Activated B cell treated with CpG ODN at 0.5 μM for 24 hours (primary cell): ENCODE measurements at regions of chr4 and their contacts with region 1.

Region 1: GRCh38 chr4:47562297-47562696 is 77.2 kb downstream of the ATP10D start:
- DNase-seq: no peak
- ATAC-seq: no peak
- H3K4me3 Mint-ChIP-seq: no peak overlapping the region
- H3K27ac Mint-ChIP-seq: no peak overlapping the region
- H3K4me1 Mint-ChIP-seq: peaks cover 10% of the 10 kb centered on the region
- H3K27me3 Mint-ChIP-seq: no peaks in the 10 kb centered on the region
- CTCF ChIP-seq: no peak

Region 2: GRCh38 chr4:46844325-46844917 is 717.9 kb before region 1 on chr4:
- CTCF ChIA-PET with region 1: no interaction called
- POLR2A ChIA-PET with region 1: no interaction called
- intact Hi-C with region 1: loop called (anchors 10 kb)
- DNase-seq: no peak
- ATAC-seq: no peak
- H3K4me3 Mint-ChIP-seq: no peak overlapping the region
- H3K27ac Mint-ChIP-seq: no peak overlapping the region
- H3K4me1 Mint-ChIP-seq: no peaks in the 10 kb centered on the region
- H3K27me3 Mint-ChIP-seq: no peaks in the 10 kb centered on the region
- CTCF ChIP-seq: peak; percentile 61

Region 3: GRCh38 chr4:47485047-47485692 is 77.1 kb before region 1 on chr4 and contains the start of gene ATP10D:
- CTCF ChIA-PET with region 1: interaction called, 8 read pairs
- POLR2A ChIA-PET with region 1: no interaction called
- intact Hi-C with region 1: loop called (anchors 1 kb)
- DNase-seq: peak; percentile 82
- ATAC-seq: peak; percentile 96
- H3K4me3 Mint-ChIP-seq: peak within 1 kb of the TSS; percentile 99
- H3K27ac Mint-ChIP-seq: peak within 1 kb of the TSS; percentile 99
- H3K4me1 Mint-ChIP-seq: peaks cover 64% of the 10 kb centered on the region
- H3K27me3 Mint-ChIP-seq: no peaks in the 10 kb centered on the region
- CTCF ChIP-seq: no peak
- total RNA-seq, gene ATP10D: 26.2 and 31.6 TPM in 2 replicates

Region 4: GRCh38 chr4:47490550-47490949 is 71.7 kb before region 1 on chr4:
- CTCF ChIA-PET with region 1: interaction called, 9 read pairs
- POLR2A ChIA-PET with region 1: interaction called, 3 read pairs
- intact Hi-C with region 1: loop called (anchors 1 kb)
- DNase-seq: no peak
- ATAC-seq: peak; percentile 88
- H3K4me3 Mint-ChIP-seq: no peak overlapping the region
- H3K27ac Mint-ChIP-seq: peak overlapping the region; percentile 54
- H3K4me1 Mint-ChIP-seq: peaks cover 74% of the 10 kb centered on the region
- H3K27me3 Mint-ChIP-seq: no peaks in the 10 kb centered on the region
- CTCF ChIP-seq: peak; percentile 28

Region 5: DNA sequence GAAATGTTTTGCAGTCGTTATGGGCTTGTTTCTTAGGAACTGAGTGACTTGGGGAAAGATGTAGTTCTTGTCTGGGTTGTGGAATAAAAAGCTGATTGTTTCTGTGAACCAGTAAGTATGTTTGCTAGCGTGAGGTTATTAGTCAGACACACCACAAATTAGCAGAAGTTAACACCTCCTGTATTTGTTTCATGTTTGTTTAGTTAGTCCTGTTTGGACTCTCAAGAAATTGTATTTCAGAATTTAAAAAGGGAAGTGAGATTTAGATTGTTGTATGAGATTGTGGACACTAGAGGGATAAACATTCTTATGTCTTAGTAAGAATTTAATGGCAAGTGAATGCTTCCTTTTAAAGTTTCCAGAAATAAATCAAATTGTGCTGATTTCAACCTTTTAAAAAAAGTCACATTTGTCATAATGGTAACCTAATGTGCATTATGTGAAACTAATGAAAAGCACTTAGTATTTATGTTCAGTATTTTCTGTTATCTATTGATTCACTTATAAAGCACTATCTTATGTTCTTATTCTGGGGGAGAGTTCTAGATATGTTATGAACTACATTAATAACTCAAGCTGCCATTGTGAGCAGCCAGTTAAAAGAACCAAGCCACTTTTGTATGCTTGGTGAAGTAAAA is 51.7 kb before region 1 on chr4:
- CTCF ChIA-PET with region 1: interaction called, 4 read pairs
- POLR2A ChIA-PET with region 1: interaction called, 7 read pairs
- intact Hi-C with region 1: loop called (anchors 5 kb)
- DNase-seq: no peak
- ATAC-seq: peak; percentile 90
- H3K4me3 Mint-ChIP-seq: peak overlapping the region; percentile 21
- H3K27ac Mint-ChIP-seq: peak overlapping the region; percentile 76
- H3K4me1 Mint-ChIP-seq: peaks cover 70% of the 10 kb centered on the region
- H3K27me3 Mint-ChIP-seq: no peaks in the 10 kb centered on the region
- CTCF ChIP-seq: no peak

Region 6: GRCh38 chr4:47914220-47914925 is 352.1 kb after region 1 on chr4 and contains the start of gene NFXL1:
- CTCF ChIA-PET with region 1: no interaction called
- POLR2A ChIA-PET with region 1: no interaction called
- intact Hi-C with region 1: loop called (anchors 10 kb)
- DNase-seq: peak; percentile 90
- ATAC-seq: peak; percentile 96
- H3K4me3 Mint-ChIP-seq: peak within 1 kb of the TSS; percentile 98
- H3K27ac Mint-ChIP-seq: peak within 1 kb of the TSS; percentile 92
- H3K4me1 Mint-ChIP-seq: peaks cover 31% of the 10 kb centered on the region
- H3K27me3 Mint-ChIP-seq: no peaks in the 10 kb centered on the region
- CTCF ChIP-seq: no peak
- total RNA-seq, gene NFXL1: 10.0 and 11.1 TPM in 2 replicates